T-cell (primary cell): ENCODE measurements at regions of chr17 and their contacts with region 1.

Region 1: DNA sequence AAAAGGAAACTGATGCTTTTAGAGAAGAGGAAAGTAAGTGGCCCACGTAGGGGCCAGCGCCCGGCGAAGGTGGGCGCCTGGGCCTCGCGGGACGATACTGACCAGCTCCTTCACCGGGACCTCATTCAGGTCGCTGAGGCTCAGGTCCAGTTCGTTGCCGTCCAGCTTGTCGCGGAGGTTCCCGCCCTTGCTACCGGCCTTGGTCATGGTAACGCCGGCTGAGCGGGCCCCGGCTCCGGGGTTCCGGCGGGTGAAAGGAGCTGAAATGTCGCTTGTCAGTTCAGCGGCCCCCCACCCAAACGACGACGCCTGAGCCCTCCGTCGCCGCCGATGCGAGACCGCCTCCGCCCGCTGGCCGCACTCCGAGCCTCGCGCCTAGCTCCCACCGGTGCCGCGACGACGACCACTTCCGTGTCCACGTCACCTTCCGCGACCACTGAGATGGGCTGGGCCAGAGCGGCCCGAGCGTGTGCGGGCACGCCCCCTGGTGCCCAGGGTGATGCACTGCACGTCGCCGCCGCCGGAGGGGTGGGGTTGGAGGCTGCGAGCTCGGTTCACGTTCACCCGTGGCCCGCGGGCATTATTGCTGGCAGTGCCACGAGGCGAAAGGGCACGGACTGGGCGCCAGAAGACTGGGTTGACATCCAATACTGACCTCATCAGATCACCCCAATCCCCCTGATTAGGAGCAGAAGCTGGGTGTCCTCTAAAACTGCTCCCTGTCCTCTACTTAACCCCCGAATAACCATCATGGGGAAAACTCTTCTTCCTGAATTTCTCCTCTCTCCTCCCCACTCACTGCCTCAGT is at the start of gene LRRC59:
- DNase-seq: peak; percentile 81 to 96 (median 90)
- ATAC-seq: peak; percentile 98 to 100 (median 98)
- H3K4me3 ChIP-seq: peak within 1 kb of the TSS; percentile 93 to 99
- H3K4me3 Mint-ChIP-seq: peak within 1 kb of the TSS; percentile 85 to 94 (median 89)
- H3K27ac ChIP-seq: peak within 1 kb of the TSS; percentile 77
- H3K27ac Mint-ChIP-seq: peak within 1 kb of the TSS; percentile 84 to 87
- H3K4me1 ChIP-seq: peaks cover 17 to 28% of the 10 kb centered on the region in 2 experiments
- H3K4me1 Mint-ChIP-seq: peaks cover 38 to 43% (median 40%) of the 10 kb centered on the region in 3 donors
- H3K27me3 ChIP-seq: no peaks in the 10 kb centered on the region
- H3K27me3 Mint-ChIP-seq: no peaks in the 10 kb centered on the region
- total RNA-seq, gene LRRC59: 29.4 to 41.7 (median 33.1) TPM

Region 2: GRCh38 chr17:49815761-49816281 is 581.5 kb before region 1 on chr17:
- CTCF ChIA-PET with region 1: no interaction called
- POLR2A ChIA-PET with region 1: interaction called in 1 of 2 experiments, 12 read pairs
- DNase-seq: no peak
- ATAC-seq: no peak
- H3K4me3 ChIP-seq: no peak overlapping the region
- H3K4me3 Mint-ChIP-seq: peak overlapping the region in 1 of 3 donors; percentile 15
- H3K27ac ChIP-seq: peak overlapping the region; percentile 11
- H3K27ac Mint-ChIP-seq: peak overlapping the region; percentile 90 to 99
- H3K4me1 ChIP-seq: peaks cover 53 to 62% of the 10 kb centered on the region in 2 experiments
- H3K4me1 Mint-ChIP-seq: peaks cover 71 to 74% (median 74%) of the 10 kb centered on the region in 3 donors
- H3K27me3 ChIP-seq: no peaks in the 10 kb centered on the region
- H3K27me3 Mint-ChIP-seq: no peaks in the 10 kb centered on the region

Region 3: DNA sequence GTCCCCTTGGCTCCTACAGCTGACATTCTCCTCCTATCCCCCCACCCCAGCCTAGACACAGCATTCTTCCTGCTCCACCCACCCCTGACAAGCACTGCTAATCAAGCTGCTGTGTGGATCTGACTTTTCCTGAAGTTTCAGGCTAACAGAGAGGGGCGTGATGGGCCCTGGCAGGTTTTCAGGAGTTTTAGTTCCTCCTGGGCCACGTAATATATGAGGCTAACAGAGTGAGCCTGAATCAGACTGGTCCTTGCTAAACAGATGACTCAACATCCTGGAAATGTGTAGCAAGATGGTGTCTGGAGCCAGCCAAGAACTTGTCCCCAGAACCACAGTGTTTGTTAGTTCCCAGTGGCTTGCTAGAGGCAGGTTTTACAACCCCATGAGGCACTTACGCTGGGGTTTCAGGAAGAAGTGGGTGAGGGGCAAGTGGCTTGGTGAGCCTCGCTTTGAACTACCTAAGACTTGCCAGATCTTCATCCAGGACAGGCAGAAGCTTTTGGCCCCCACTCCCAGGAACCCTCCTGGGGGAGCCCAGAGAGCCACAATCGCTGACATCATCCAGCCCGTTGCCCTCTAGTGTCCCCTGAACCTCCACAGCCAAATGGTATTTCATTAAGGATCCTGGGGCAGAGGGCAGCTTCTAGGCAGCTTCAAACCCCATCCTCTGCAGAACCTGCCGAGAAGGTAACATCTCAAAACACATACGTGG is 107.2 kb before region 1 on chr17:
- CTCF ChIA-PET with region 1: no interaction called
- POLR2A ChIA-PET with region 1: no interaction called
- DNase-seq: no peak
- ATAC-seq: peak in 1 of 4 experiments; percentile 48
- H3K4me3 ChIP-seq: no peak overlapping the region
- H3K4me3 Mint-ChIP-seq: no peak overlapping the region
- H3K27ac ChIP-seq: no peak overlapping the region
- H3K27ac Mint-ChIP-seq: no peak overlapping the region
- H3K4me1 ChIP-seq: no peaks in the 10 kb centered on the region
- H3K4me1 Mint-ChIP-seq: peaks cover 0 to 2% (median 0%) of the 10 kb centered on the region in 3 donors
- H3K27me3 ChIP-seq: peaks cover 0 to 33% of the 10 kb centered on the region in 2 experiments
- H3K27me3 Mint-ChIP-seq: peaks cover 34 to 37% of the 10 kb centered on the region in 2 donors

Region 4: DNA sequence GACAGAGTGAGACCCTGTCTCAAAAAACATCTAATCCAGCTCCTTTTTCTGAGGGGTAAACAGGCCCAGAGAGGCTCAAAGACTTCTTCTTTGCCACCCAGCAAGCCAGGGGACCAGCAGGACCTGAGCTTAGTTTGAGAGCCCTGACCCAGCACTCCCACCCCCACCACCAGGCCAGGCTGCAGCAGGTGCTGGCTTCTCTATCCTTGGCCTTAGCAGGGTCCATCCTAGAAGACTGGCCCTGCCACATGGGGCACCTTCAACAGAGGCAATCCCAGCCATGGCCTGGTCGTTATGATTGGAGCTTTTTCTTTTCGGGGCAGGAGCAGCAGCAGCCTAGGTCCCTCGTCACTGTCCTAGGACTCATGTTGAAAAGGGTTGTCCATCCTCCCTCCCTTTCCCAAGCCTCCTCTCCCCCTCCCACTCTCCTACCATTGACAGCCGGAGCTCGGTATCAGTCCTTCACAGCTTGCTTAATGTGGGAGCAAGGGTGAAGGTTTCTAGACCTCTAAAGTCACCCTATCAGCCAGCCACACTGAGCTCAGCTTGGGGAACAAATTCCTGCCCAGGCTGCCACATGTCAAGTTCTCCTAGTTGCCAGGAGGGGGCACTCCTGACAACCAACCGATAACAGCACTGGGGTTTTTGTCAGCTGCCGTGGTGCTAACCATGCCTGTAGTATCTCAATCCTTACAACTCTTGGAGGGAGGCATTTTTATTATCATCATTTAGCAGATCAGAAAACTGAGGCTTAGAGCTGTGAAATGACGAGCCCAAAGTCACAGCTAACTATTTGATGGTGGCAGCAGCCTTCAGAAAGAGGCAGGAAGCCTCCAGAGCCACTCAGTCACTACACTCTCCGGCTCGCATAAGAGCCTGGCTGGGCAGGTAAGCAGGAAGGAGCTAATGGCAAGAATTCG is 35.5 kb before region 1 on chr17:
- CTCF ChIA-PET with region 1: interaction called, 8 to 36 read pairs
- POLR2A ChIA-PET with region 1: interaction called in 1 of 2 experiments, 4 read pairs
- DNase-seq: peak in 33 of 35 experiments; percentile 28 to 82 (median 50)
- ATAC-seq: peak; percentile 80 to 88 (median 86)
- H3K4me3 ChIP-seq: no peak overlapping the region
- H3K4me3 Mint-ChIP-seq: peak overlapping the region; percentile 13 to 33 (median 26)
- H3K27ac ChIP-seq: peak overlapping the region; percentile 20
- H3K27ac Mint-ChIP-seq: peak overlapping the region; percentile 71 to 73
- H3K4me1 ChIP-seq: peaks cover 0 to 23% of the 10 kb centered on the region in 2 experiments
- H3K4me1 Mint-ChIP-seq: peaks cover 8 to 11% (median 11%) of the 10 kb centered on the region in 3 donors
- H3K27me3 ChIP-seq: no peaks in the 10 kb centered on the region
- H3K27me3 Mint-ChIP-seq: no peaks in the 10 kb centered on the region

Region 5: GRCh38 chr17:50372758-50373556 is 24.4 kb before region 1 on chr17 and contains the starts of genes EME1 and MRPL27:
- CTCF ChIA-PET with region 1: interaction called, 3 to 13 read pairs
- POLR2A ChIA-PET with region 1: interaction called in 1 of 2 experiments, 4 read pairs
- DNase-seq: peak; percentile 72 to 91 (median 83)
- ATAC-seq: peak; percentile 92 to 95 (median 94)
- H3K4me3 ChIP-seq: peak within 1 kb of the TSS; percentile 86 to 94
- H3K4me3 Mint-ChIP-seq: peak within 1 kb of the TSS; percentile 91 to 99 (median 99)
- H3K27ac ChIP-seq: peak within 1 kb of the TSS; percentile 89
- H3K27ac Mint-ChIP-seq: peak within 1 kb of the TSS; percentile 100
- H3K4me1 ChIP-seq: peaks cover 5 to 24% of the 10 kb centered on the region in 2 experiments
- H3K4me1 Mint-ChIP-seq: peaks cover 22 to 33% (median 26%) of the 10 kb centered on the region in 3 donors
- H3K27me3 ChIP-seq: no peaks in the 10 kb centered on the region
- H3K27me3 Mint-ChIP-seq: no peaks in the 10 kb centered on the region
- total RNA-seq, gene EME1: 0.75 to 2.1 (median 1.4) TPM
- total RNA-seq, gene MRPL27: 26.0 to 35.0 (median 31.2) TPM

Region 6: GRCh38 chr17:50421308-50422051 is 24.2 kb after region 1 on chr17:
- CTCF ChIA-PET with region 1: interaction called in 1 of 2 experiments, 18 read pairs
- POLR2A ChIA-PET with region 1: interaction called in 1 of 2 experiments, 4 read pairs
- DNase-seq: peak in 1 of 35 experiments; percentile 31
- ATAC-seq: peak in 1 of 4 experiments; percentile 39
- H3K4me3 ChIP-seq: peak overlapping the region; percentile 26 to 45
- H3K4me3 Mint-ChIP-seq: peak overlapping the region; percentile 66 to 78 (median 66)
- H3K27ac ChIP-seq: peak overlapping the region; percentile 76
- H3K27ac Mint-ChIP-seq: peak overlapping the region; percentile 91 to 94
- H3K4me1 ChIP-seq: peaks cover 16 to 30% of the 10 kb centered on the region in 2 experiments
- H3K4me1 Mint-ChIP-seq: peaks cover 20 to 37% (median 31%) of the 10 kb centered on the region in 3 donors
- H3K27me3 ChIP-seq: no peaks in the 10 kb centered on the region
- H3K27me3 Mint-ChIP-seq: peaks cover 0 to 2% of the 10 kb centered on the region in 2 donors

Region 7: DNA sequence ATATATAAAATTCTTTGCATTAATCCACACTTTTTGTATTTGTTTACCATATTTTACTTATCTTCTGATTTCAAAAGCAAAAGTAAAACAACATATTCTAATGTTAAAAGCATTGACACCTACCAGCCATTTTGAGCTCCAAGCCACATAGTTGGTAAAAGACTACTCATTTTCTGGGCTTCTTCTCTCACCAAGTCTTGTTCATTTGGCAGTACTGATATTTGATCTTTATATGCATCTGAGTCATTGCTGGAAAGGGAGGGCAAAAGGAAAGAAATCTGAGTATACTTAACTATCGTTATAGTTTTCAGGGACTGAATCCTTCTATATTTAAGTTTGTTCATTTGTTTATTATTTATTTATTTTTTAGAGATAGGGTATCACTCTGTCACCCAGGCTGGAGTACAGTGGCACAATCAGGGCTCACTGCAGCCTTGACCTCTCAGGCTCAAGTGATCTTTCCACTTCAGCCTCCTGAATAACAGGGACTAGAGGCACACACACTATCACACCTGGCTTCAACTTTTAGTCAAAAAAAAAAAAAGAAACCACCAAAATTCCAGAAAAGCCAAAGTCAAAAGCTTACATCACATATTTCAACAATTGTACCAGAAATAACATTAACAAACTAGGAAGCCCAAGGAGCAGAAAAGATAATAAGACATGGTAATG is 589.8 kb after region 1 on chr17:
- CTCF ChIA-PET with region 1: interaction called in 1 of 2 experiments, 14 read pairs
- POLR2A ChIA-PET with region 1: no interaction called
- DNase-seq: no peak
- ATAC-seq: no peak
- H3K4me3 ChIP-seq: no peak overlapping the region
- H3K4me3 Mint-ChIP-seq: no peak overlapping the region
- H3K27ac ChIP-seq: no peak overlapping the region
- H3K27ac Mint-ChIP-seq: peak overlapping the region in 1 of 2 donors; percentile 28
- H3K4me1 ChIP-seq: no peaks in the 10 kb centered on the region
- H3K4me1 Mint-ChIP-seq: no peaks in the 10 kb centered on the region
- H3K27me3 ChIP-seq: no peaks in the 10 kb centered on the region
- H3K27me3 Mint-ChIP-seq: no peaks in the 10 kb centered on the region